ENCODE measurements at regions of chr6 and their contacts with region 1.

Region 1: GRCh38 chr6:158769771-158770432 is 49.3 kb downstream of the EZR start:
- DNase-seq: no peak
- ATAC-seq: no peak
- H3K4me3 ChIP-seq: no peak overlapping the region
- H3K27ac ChIP-seq: no peak overlapping the region
- H3K4me1 ChIP-seq: no peaks in the 10 kb centered on the region
- H3K27me3 ChIP-seq: no peaks in the 10 kb centered on the region
- CTCF ChIP-seq: no peak

Region 2: DNA sequence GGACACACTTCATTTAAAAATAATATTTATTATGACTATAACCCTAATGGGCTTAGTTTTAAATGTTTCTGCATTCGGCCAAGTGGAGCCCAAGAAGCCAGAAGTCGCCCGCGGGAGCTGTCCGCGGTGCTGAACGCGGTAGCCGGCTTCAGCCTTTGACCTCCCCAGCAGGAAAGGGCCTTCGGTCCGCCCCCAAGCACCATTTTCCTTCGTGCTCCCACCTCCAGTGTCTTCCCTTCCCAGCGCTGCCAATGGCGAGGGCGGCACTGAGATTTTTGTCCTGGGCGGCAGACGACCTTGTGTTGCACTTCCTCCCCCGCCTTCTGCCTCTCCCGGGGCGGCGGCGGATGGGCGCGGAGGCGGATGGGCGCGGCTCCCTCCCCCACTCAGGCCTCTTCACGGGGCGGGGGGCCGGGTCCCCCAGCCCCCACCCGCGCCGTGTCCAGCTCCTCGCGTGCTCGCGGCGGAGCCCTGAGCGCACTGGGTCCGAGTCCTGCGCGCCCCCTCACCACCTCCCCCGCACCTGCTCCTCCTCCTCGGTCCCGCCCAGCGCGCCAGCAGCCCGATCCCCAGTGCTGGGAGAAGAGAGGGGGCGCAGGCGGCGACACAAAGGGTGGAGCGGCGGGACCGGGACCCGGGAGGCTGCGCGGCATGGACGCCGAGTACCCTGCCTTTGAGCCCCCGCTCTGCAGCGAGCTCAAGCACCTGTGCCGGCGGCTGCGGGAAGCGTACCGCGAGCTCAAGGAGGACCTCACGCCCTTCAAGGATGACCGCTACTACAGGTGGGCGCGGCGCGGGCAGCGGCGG is 233.6 kb before region 1 on chr6:
- CTCF ChIA-PET with region 1: interaction called, 11 read pairs
- POLR2A ChIA-PET with region 1: no interaction called
- in situ Hi-C with region 1: no loop called
- intact Hi-C with region 1: no loop called
- DNase-seq: no peak
- ATAC-seq: peak; percentile 68
- H3K4me3 ChIP-seq: peak overlapping the region; percentile 56 to 62
- H3K27ac ChIP-seq: no peak overlapping the region
- H3K4me1 ChIP-seq: no peaks in the 10 kb centered on the region
- H3K27me3 ChIP-seq: peaks cover 11% of the 10 kb centered on the region
- CTCF ChIP-seq: no peak

Region 3: GRCh38 chr6:158677906-158678578 is 91.9 kb before region 1 on chr6:
- CTCF ChIA-PET with region 1: no interaction called
- POLR2A ChIA-PET with region 1: no interaction called
- in situ Hi-C with region 1: no loop called
- intact Hi-C with region 1: no loop called
- DNase-seq: no peak
- ATAC-seq: no peak
- H3K4me3 ChIP-seq: no peak overlapping the region
- H3K27ac ChIP-seq: no peak overlapping the region
- H3K4me1 ChIP-seq: no peaks in the 10 kb centered on the region; the same call in 1 of the 2 replicates
- H3K27me3 ChIP-seq: no peaks in the 10 kb centered on the region
- CTCF ChIP-seq: no peak

Region 4: DNA sequence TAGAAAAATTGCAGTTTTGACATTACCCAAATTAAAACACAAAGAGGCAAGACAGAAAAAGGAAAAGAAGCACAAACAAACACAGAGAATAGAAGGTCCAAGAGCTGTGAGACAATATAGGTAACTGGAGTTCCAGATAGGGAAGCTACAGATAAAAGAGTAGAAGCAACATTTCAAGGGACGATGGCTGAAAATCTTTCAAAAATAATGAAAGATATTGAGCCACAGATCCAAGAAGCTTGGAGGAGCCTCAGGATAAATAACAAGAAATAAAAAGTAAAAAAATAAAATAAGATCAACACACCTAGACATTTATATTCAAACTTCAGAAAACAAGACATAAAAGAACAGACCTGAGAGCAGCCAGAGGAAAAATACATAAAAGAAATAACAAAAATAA is 564.2 kb after region 1 on chr6:
- CTCF ChIA-PET with region 1: no interaction called
- POLR2A ChIA-PET with region 1: no interaction called
- in situ Hi-C with region 1: no loop called
- intact Hi-C with region 1: no loop called
- DNase-seq: no peak
- ATAC-seq: no peak
- H3K4me3 ChIP-seq: no peak overlapping the region
- H3K27ac ChIP-seq: no peak overlapping the region
- H3K4me1 ChIP-seq: no peaks in the 10 kb centered on the region
- H3K27me3 ChIP-seq: no peaks in the 10 kb centered on the region
- CTCF ChIP-seq: no peak

Region 5: DNA sequence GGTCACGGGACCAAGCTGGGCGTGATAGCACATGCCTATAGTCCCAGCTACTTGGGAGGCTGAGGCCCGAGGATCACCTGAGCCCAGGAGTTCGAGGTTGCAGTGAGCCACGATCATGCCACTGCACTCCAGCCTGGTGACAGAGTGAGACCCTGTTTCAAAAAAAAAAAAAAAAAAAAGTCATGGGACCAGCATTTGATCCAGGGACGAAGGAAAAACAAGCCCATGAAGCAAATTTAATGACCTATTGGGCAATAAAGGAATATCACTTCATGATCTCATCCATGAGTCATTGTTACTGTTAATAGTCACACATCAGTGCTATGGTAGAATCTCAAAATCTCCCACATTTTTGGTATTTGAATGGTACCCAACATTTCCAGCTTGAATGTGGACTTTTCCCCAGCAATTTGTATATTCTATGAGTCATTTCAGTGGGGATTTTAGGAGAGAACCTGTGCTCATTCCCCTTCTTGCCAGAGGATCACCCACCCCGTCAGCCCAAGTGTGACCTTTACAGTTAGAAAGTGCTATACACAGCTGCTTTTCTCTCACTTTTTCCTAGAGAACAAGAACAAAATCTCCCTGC is 931.6 kb after region 1 on chr6:
- CTCF ChIA-PET with region 1: no interaction called
- POLR2A ChIA-PET with region 1: no interaction called
- in situ Hi-C with region 1: no loop called
- intact Hi-C with region 1: no loop called
- DNase-seq: no peak
- ATAC-seq: peak; percentile 62; the same call in 1 of the 2 replicates
- H3K4me3 ChIP-seq: no peak overlapping the region
- H3K27ac ChIP-seq: no peak overlapping the region
- H3K4me1 ChIP-seq: peaks cover 3% of the 10 kb centered on the region; the same call in 1 of the 2 replicates
- H3K27me3 ChIP-seq: no peaks in the 10 kb centered on the region
- CTCF ChIP-seq: no peak

Measured in Panc1 (cell line).